Heart right ventricle (tissue), 16 donors: ENCODE measurements at regions of chr5 and their contacts with region 1.

Region 1: DNA sequence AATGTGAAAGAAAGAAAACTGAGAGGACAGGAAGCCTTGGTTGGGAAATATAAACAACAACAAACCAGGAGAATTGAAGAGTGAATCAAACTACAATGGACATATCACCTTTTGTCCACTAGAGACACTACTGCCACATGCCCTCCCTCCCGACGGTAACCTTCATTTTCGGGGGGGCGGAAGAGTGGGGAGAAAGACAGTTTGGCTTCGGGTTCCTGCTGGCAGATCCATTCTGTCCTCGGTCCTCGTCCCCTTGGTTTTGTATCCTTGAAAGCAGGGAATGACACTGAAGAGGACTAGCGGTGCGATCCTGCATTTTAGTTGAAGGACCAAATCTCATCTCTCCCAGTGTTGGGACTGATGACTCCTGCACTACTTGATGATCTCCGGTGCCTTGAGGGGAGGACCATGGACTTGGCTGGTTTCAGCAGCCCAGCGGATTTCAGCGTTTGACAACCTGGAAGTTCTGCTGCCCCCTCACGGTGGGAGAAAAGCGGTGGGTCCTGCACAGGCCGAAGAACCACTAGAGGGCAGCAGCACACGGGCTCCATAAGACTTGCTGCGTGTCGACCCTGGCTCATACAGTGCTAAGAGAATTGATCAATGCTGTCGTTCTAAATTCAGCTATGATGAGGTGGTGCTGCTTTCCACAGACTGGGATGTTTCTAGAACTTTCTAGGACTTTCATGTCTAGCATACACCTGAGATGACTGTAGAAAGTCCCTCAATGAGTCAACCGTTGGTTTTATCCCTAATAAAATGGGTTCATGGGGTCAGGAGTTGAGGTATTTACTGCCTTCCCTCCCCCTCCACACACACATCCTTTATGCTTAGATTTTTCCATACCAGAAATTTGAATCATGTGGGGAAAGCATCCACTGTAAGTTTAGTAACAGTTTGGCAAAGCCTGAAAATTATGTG is 15.1 kb upstream of the ZNF131 start:
- DNase-seq: peak; percentile 87 to 90
- ATAC-seq: peak; percentile 90 to 97 (median 95)
- H3K4me3 ChIP-seq: peak overlapping the region in 9 of 10 donors; percentile 26 to 58 (median 48)
- H3K27ac ChIP-seq: peak overlapping the region in 9 of 10 donors; percentile 42 to 76 (median 53)
- H3K4me1 ChIP-seq: peaks cover 0 to 10% (median 5%) of the 10 kb centered on the region in 9 donors
- H3K27me3 ChIP-seq: no peaks in the 10 kb centered on the region
- CTCF ChIP-seq: peak; percentile 97 to 100 (median 100)

Region 2: DNA sequence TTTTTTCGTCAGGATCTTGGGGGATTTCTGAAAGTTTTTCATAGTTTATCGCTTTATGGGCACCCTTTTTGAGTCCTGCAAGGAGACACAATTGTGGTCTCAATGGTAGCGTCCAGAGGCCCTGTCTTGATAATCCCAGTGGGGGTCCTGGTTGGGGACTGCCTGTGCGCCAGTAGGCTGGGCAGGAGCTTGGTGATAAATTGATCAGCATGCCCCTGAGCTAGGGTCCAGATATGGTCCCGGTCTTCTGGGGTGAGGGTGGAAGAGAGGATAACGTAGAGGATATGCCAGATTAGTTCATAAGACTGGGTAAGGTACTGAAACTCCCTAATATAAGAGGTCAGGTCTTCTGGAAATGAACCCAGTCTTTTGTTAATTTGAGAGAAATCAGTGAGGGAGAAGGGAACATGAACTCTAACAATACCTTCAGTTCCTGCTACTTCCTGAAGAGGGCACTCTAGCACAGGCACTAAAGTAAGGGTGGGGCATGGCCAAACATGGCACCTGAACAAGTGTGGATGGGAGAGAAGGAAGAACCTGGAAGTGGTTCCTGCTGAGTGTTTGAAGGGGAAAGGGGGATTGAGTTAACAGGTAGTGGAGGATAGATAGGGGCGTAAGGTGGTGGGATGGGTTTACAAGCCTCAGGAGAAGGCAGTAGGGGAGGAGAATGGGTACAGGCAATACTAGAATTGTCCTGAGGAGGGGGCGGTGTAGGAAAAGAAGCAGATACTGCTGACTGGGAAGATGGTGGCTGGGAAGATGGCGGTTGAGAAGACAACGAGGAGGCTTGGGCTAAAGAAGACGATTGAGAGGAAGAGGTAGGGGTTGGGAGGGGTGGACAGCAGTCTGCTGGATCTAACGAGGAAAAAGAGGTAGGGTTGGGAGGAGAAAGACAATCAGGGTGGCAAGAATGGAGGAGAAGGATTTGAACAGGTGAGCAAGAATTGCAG is 31.8 kb before region 1 on chr5:
- intact Hi-C with region 1: loop called in 4 of 10 experiments (anchors 5 kb)
- DNase-seq: no peak
- ATAC-seq: no peak
- H3K4me3 ChIP-seq: no peak overlapping the region
- H3K27ac ChIP-seq: no peak overlapping the region
- H3K4me1 ChIP-seq: peaks cover 3 to 39% (median 25%) of the 10 kb centered on the region in 9 donors
- H3K27me3 ChIP-seq: no peaks in the 10 kb centered on the region
- CTCF ChIP-seq: peak in 8 of 9 donors; percentile 32 to 71 (median 57)

Region 3: DNA sequence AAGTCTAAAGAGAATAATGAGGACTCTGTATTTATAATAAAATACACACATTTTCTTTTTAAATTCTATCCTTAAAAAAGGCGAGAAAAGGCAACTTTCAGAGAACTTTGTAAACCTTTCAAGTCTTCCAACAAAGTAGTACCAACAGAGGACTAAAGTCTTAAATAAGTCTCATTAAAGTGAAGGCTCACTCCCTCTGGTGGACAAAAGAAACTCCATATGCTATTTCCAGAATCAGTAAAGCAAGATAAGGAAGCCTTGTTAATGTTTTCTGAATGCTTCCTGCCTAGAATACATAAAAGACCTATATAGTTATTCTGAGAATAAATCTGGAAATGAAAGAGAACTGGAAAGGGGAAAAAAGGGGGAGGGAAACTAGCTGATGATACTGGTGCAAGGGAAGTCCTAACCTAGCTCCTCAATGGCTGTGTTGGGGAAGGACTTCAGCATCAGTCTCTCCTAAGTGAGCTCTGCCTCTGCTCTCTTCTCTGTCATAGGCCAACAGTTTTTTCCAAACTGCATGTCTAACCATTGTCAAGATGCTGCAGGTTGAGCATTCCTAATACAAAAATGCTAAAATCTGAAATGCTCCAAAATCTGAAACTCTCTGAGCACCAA is 200.4 kb after region 1 on chr5:
- intact Hi-C with region 1: loop called in 2 of 10 experiments (anchors 10 kb)
- DNase-seq: no peak
- ATAC-seq: peak in 5 of 8 donors; percentile 56 to 73 (median 61)
- H3K4me3 ChIP-seq: no peak overlapping the region
- H3K27ac ChIP-seq: no peak overlapping the region
- H3K4me1 ChIP-seq: peaks cover 0 to 73% (median 22%) of the 10 kb centered on the region in 9 donors
- H3K27me3 ChIP-seq: no peaks in the 10 kb centered on the region
- CTCF ChIP-seq: peak; percentile 23 to 79 (median 70)

Region 4: GRCh38 chr5:43422143-43422542 is 316.5 kb after region 1 on chr5:
- intact Hi-C with region 1: no loop called
- DNase-seq: no peak
- ATAC-seq: no peak
- H3K4me3 ChIP-seq: no peak overlapping the region
- H3K27ac ChIP-seq: no peak overlapping the region
- H3K4me1 ChIP-seq: no peaks in the 10 kb centered on the region
- H3K27me3 ChIP-seq: no peaks in the 10 kb centered on the region
- CTCF ChIP-seq: no peak